ENCODE measurements at regions of chr4 and their contacts with region 1.

Region 1: DNA sequence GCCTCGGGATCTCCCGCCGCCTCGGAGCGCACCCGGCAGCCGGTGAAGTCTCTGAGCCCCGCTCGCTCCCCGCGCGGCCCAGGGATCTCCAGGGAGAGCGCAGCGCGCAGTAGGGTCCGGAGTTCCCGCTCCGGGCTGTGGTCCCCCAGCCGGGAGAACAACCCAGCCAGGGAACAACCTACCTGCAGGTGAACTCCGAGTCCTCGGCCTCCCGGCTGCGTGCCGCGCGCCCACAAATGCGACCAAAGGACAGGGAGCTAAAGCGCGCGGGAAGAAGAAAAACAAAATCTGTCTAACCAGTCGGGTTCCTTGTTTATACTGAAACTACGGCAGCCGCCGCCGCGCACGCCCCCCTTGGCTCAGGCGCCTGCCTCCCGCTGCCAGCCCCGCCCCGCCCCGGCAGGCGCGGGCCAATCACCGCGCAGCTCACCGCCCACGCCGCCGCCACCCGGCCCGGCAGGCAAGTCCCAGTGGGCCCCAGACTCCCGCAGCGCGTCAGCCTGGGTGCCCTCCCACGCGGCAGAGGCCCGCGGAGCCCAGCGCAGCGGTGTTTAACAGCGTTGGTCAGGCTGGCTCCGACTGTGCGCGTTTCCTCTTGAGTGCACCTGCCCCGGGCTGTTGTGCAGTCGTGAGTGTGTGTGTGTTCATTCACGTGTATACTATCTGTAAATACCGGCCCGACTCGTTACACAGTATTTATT is at the start of gene RASGEF1B:
- DNase-seq: peak; percentile 88 to 94
- H3K4me3 ChIP-seq: peak within 1 kb of the TSS; percentile 92
- H3K4me3 Mint-ChIP-seq: peak within 1 kb of the TSS; percentile 95
- H3K27ac Mint-ChIP-seq: peak within 1 kb of the TSS; percentile 94
- H3K4me1 ChIP-seq: peaks cover 38% of the 10 kb centered on the region
- H3K4me1 Mint-ChIP-seq: peaks cover 31% of the 10 kb centered on the region
- H3K27me3 ChIP-seq: no peaks in the 10 kb centered on the region
- H3K27me3 Mint-ChIP-seq: no peaks in the 10 kb centered on the region
- CTCF ChIP-seq: no peak
- total RNA-seq, gene RASGEF1B: 24.8 and 32.3 TPM in 2 replicates

Region 2: GRCh38 chr4:81405894-81406401 is 65.8 kb before region 1 on chr4:
- CTCF ChIA-PET with region 1: no interaction called
- POLR2A ChIA-PET with region 1: no interaction called
- intact Hi-C with region 1: loop called (anchors 1 kb)
- DNase-seq: peak; percentile 46 to 66
- H3K4me3 ChIP-seq: no peak overlapping the region
- H3K4me3 Mint-ChIP-seq: no peak overlapping the region
- H3K27ac Mint-ChIP-seq: no peak overlapping the region
- H3K4me1 ChIP-seq: no peaks in the 10 kb centered on the region
- H3K4me1 Mint-ChIP-seq: peaks cover 7% of the 10 kb centered on the region
- H3K27me3 ChIP-seq: no peaks in the 10 kb centered on the region
- H3K27me3 Mint-ChIP-seq: peaks cover 4% of the 10 kb centered on the region
- CTCF ChIP-seq: peak; percentile 51 to 85

Region 3: GRCh38 chr4:81600520-81601357 is 129.0 kb after region 1 on chr4:
- CTCF ChIA-PET with region 1: no interaction called
- POLR2A ChIA-PET with region 1: no interaction called
- intact Hi-C with region 1: loop called (anchors 5 kb)
- DNase-seq: peak in 1 of 2 experiments; percentile 34
- H3K4me3 ChIP-seq: no peak overlapping the region
- H3K4me3 Mint-ChIP-seq: no peak overlapping the region
- H3K27ac Mint-ChIP-seq: peak overlapping the region; percentile 42
- H3K4me1 ChIP-seq: peaks cover 21% of the 10 kb centered on the region
- H3K4me1 Mint-ChIP-seq: peaks cover 6% of the 10 kb centered on the region
- H3K27me3 ChIP-seq: no peaks in the 10 kb centered on the region
- H3K27me3 Mint-ChIP-seq: no peaks in the 10 kb centered on the region
- CTCF ChIP-seq: no peak

Region 4: DNA sequence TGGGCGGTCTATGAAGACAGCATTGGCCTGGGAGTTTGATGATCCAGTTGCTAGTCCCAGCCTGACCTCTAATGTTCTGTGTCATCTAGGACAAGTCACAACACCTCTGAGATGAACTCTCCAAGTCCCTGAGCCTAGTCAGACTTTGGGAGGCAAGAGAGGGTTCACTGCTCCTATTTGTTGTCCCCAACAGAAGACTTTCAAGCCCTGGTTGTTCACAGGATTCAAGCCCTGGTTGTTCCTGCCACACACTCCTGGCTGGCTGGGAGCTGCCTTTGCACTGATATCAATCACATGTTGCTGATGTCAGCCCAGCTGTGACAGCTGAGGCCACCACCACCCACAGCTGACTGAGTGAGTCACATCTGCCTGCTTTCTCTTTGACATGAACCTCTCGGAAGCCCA is 253.2 kb after region 1 on chr4:
- CTCF ChIA-PET with region 1: interaction called, 4 read pairs
- POLR2A ChIA-PET with region 1: no interaction called
- intact Hi-C with region 1: loop called (anchors 1 kb)
- DNase-seq: peak; percentile 62 to 67
- H3K4me3 ChIP-seq: no peak overlapping the region
- H3K4me3 Mint-ChIP-seq: peak overlapping the region; percentile 20
- H3K27ac Mint-ChIP-seq: peak overlapping the region; percentile 51
- H3K4me1 ChIP-seq: peaks cover 35% of the 10 kb centered on the region
- H3K4me1 Mint-ChIP-seq: peaks cover 39% of the 10 kb centered on the region
- H3K27me3 ChIP-seq: no peaks in the 10 kb centered on the region
- H3K27me3 Mint-ChIP-seq: no peaks in the 10 kb centered on the region
- CTCF ChIP-seq: no peak

Region 5: GRCh38 chr4:81844717-81845116 is 373.0 kb after region 1 on chr4:
- CTCF ChIA-PET with region 1: interaction called, 16 read pairs
- POLR2A ChIA-PET with region 1: interaction called, 4 read pairs
- intact Hi-C with region 1: loop called (anchors 1 kb)
- DNase-seq: peak; percentile 82 to 88
- H3K4me3 ChIP-seq: no peak overlapping the region
- H3K4me3 Mint-ChIP-seq: peak overlapping the region; percentile 13
- H3K27ac Mint-ChIP-seq: peak overlapping the region; percentile 67
- H3K4me1 ChIP-seq: peaks cover 42% of the 10 kb centered on the region
- H3K4me1 Mint-ChIP-seq: peaks cover 31% of the 10 kb centered on the region
- H3K27me3 ChIP-seq: no peaks in the 10 kb centered on the region
- H3K27me3 Mint-ChIP-seq: no peaks in the 10 kb centered on the region
- CTCF ChIP-seq: peak; percentile 64 to 70

Region 6: GRCh38 chr4:82201805-82202641 is 730.3 kb after region 1 on chr4:
- CTCF ChIA-PET with region 1: no interaction called
- POLR2A ChIA-PET with region 1: no interaction called
- intact Hi-C with region 1: loop called (anchors 1 kb)
- DNase-seq: peak; percentile 57 to 63
- H3K4me3 ChIP-seq: no peak overlapping the region
- H3K4me3 Mint-ChIP-seq: no peak overlapping the region
- H3K27ac Mint-ChIP-seq: peak overlapping the region; percentile 51
- H3K4me1 ChIP-seq: no peaks in the 10 kb centered on the region
- H3K4me1 Mint-ChIP-seq: no peaks in the 10 kb centered on the region
- H3K27me3 ChIP-seq: no peaks in the 10 kb centered on the region
- H3K27me3 Mint-ChIP-seq: peaks cover 4% of the 10 kb centered on the region
- CTCF ChIP-seq: peak; percentile 57 to 84

Measured in Caco-2 (cell line).